ENCODE measurements at regions of chr15 and their contacts with region 1.

Region 1: DNA sequence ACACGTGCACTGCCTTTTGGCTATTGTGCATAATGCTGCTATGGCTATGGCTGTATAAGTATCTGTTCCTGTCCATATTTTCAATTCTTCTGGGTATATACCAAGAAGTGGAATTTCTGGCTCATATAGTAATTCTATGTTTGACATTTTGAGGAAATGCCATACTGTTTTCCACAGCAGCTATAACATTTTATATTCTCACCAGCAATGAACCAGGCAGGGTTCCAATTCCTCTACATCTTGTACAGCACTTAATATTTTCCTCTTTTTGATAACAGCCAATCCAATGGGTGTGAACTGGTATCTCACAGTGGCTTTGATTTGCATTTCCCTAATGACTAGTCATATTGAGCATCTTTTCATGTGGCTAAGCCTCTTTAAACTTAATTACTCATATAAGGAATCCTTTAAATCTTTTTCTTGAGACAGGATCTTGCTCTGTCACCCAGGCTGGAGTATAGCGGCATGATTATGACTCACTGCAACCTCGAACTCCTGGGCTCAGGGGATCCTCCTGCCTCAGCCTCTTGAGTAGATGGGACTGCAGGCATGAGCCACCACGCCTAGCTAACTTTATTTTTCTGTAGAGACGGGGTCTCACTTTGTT is 38.1 kb upstream of the IGDCC4 start:
- DNase-seq: no peak

Region 2: DNA sequence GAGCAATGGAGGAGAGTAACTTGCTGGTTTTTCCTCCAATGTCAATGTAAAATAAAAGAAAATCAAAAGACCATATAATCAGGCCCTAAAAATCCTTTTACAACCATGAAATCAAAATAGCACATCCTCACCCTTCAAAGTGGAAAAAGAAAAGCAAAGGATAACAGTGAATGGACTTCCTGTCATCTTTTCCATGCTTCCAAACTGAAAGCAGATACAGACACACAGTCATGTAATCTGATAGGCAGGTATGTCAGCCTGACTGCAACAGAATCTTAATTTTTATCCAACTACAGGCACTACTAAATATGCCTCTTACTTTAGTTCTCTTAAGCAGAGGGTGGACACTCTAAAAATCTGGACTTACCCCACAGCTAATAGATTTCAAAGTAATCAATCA is 10.3 kb before region 1 on chr15:
- intact Hi-C with region 1: no loop called
- DNase-seq: no peak

Region 3: DNA sequence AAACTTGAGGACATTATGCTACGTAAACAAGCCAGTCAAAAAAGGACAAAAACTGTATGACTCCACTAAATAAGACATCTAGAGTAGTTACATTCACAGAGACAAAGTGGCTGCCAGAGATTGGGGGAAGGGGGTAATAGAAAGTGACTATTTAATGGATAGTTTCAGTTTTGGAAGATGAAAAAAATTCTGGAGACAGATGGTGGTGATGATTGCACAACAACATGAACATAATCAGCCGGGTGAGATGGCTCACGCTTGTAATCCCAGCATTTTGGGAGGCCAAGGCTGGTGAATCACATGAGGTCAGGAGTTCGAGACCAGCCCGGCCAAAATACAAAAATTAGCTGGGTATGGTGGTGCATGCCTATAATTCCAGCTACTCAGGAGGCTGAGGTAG is 16.1 kb after region 1 on chr15:
- intact Hi-C with region 1: loop called in 1 of 2 experiments (anchors 1 kb)
- DNase-seq: no peak

Measured in posterior vena cava (tissue), 2 donors.